ENCODE measurements at regions of chr7 and their contacts with region 1.

Region 1: DNA sequence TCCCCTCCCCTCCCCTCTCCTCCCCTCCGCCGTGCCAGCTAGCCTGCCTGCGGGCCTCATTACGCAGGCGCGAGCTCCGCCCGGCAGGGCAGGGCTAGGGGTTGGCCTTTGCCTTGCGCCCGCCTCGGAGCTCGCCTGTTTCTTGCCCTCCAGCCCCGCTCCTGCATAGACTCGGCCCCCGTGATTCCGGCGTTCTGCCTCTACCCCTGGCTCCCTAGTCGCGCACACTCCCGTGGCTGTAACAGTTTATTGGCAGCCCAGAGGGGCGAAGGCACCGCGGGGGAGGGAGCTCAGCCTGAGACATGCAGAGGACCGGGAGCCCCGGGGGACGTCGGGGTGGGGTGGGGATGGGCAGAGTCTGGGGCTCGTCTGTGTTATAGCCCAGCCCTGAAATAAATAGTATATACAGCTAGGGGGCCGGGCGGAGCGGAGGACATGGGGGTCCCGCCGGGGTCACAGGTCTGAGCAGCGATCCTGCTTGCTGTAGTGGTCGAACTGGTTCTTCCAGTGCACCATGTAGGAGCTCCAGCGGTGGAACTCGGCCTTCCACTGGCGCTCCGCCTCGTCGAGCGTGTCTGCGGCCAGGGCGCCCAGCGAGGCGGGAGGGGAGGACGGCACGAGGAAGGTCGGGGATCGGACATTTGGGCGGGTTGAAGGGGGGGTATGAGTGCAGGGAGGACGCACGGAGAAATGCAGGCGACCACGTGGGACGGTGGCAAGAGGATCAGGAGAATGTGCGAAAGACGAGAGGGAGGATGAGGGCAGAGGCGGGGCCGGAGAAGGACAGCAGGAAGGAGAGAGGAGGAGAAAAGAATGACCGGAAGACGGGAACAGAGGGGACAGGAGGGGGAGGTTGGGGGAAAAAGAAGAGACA is 483 bp upstream of the UFSP1 start:
- DNase-seq: peak; percentile 98

Region 2: GRCh38 chr7:100874577-100875355 is 15.2 kb before region 1 on chr7 and contains the start of gene SRRT:
- CTCF ChIA-PET with region 1: no interaction called
- POLR2A ChIA-PET with region 1: interaction called, 158 read pairs
- DNase-seq: peak; percentile 97

Region 3: GRCh38 chr7:101085162-101085987 is 195.4 kb after region 1 on chr7 and contains the start of gene TRIM56:
- CTCF ChIA-PET with region 1: no interaction called
- POLR2A ChIA-PET with region 1: interaction called, 12 read pairs
- DNase-seq: peak; percentile 60